Activated CD4-positive, alpha-beta T cell treated with anti-CD3 and anti-CD28 coated beads for 36 hours (primary cell): ENCODE measurements at regions of chr1 and their contacts with region 1.

Region 1: DNA sequence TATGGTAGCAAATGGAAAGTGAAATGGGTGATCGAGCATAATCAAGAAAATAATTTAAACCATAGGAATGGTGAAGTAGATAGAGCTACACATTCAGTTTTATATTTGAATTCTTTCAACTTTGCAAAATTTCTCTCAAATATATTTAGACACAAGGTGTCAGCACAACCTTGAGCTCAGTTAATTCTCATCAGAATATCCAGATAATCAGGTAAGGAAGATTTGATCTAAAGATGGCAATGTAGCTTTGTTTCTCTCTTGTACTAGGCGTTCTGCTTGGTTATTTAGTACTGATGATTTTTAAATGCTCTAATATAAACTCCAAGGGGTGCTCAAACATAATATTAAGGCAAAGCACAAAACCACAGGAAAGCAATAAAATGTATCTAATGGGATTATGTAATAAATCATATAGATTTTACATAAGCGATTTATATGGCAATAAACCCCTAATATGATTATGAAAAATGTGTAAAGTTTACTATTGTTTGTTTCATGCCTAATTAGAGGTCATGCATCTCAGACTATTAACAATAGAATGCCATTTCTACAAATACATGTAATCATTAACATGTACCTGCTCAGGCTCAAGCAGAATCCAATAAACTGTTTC is 32.4 kb upstream of the SERTAD4 start:
- DNase-seq: no peak
- ATAC-seq: no peak
- H3K4me3 Mint-ChIP-seq: no peak overlapping the region
- H3K27ac Mint-ChIP-seq: no peak overlapping the region
- H3K4me1 Mint-ChIP-seq: no peaks in the 10 kb centered on the region
- H3K27me3 Mint-ChIP-seq: peaks cover 7% of the 10 kb centered on the region

Region 2: DNA sequence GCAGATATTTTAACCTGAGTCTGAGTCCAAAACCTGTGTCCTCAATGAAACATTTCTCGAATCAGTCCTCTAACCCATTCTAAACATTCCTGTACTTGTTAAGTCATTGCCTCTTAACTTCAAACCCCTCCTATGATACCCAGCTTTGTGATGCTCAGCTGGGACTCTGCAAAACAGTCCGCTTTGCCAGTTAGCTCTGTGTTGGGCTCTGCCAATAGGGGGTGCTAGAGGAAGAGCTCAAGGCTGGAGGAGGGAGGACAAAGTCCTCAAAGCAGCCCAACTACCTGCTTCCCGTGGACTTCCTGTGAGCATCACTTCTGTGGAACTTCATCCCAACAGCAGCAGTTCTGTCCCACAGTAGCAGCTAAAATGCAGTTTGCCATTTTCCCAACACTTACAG is 300.3 kb before region 1 on chr1:
- CTCF ChIA-PET with region 1: no interaction called
- POLR2A ChIA-PET with region 1: no interaction called
- intact Hi-C with region 1: no loop called
- DNase-seq: peak; percentile 61
- ATAC-seq: no peak
- H3K4me3 Mint-ChIP-seq: no peak overlapping the region
- H3K27ac Mint-ChIP-seq: no peak overlapping the region
- H3K4me1 Mint-ChIP-seq: peaks cover 8% of the 10 kb centered on the region
- H3K27me3 Mint-ChIP-seq: peaks cover 6% of the 10 kb centered on the region

Region 3: GRCh38 chr1:210061992-210062391 is 138.2 kb before region 1 on chr1:
- CTCF ChIA-PET with region 1: no interaction called
- POLR2A ChIA-PET with region 1: no interaction called
- intact Hi-C with region 1: no loop called
- DNase-seq: no peak
- ATAC-seq: no peak
- H3K4me3 Mint-ChIP-seq: no peak overlapping the region
- H3K27ac Mint-ChIP-seq: no peak overlapping the region
- H3K4me1 Mint-ChIP-seq: no peaks in the 10 kb centered on the region
- H3K27me3 Mint-ChIP-seq: peaks cover 5% of the 10 kb centered on the region

Region 4: GRCh38 chr1:210214573-210215409 is 14.6 kb after region 1 on chr1:
- CTCF ChIA-PET with region 1: no interaction called
- POLR2A ChIA-PET with region 1: interaction called, 12 read pairs
- intact Hi-C with region 1: no loop called
- DNase-seq: no peak
- ATAC-seq: no peak
- H3K4me3 Mint-ChIP-seq: no peak overlapping the region
- H3K27ac Mint-ChIP-seq: no peak overlapping the region
- H3K4me1 Mint-ChIP-seq: no peaks in the 10 kb centered on the region
- H3K27me3 Mint-ChIP-seq: peaks cover 22% of the 10 kb centered on the region

Region 5: GRCh38 chr1:210272666-210273065 is 72.4 kb after region 1 on chr1:
- CTCF ChIA-PET with region 1: no interaction called
- POLR2A ChIA-PET with region 1: no interaction called
- intact Hi-C with region 1: no loop called
- DNase-seq: no peak
- ATAC-seq: no peak
- H3K4me3 Mint-ChIP-seq: no peak overlapping the region
- H3K27ac Mint-ChIP-seq: no peak overlapping the region
- H3K4me1 Mint-ChIP-seq: no peaks in the 10 kb centered on the region
- H3K27me3 Mint-ChIP-seq: peaks cover 15% of the 10 kb centered on the region

Region 6: GRCh38 chr1:210292231-210292871 is 92.1 kb after region 1 on chr1:
- CTCF ChIA-PET with region 1: no interaction called
- POLR2A ChIA-PET with region 1: no interaction called
- intact Hi-C with region 1: no loop called
- DNase-seq: peak; percentile 74
- ATAC-seq: peak; percentile 80
- H3K4me3 Mint-ChIP-seq: no peak overlapping the region
- H3K27ac Mint-ChIP-seq: no peak overlapping the region
- H3K4me1 Mint-ChIP-seq: peaks cover 5% of the 10 kb centered on the region
- H3K27me3 Mint-ChIP-seq: peaks cover 55% of the 10 kb centered on the region

Region 7: DNA sequence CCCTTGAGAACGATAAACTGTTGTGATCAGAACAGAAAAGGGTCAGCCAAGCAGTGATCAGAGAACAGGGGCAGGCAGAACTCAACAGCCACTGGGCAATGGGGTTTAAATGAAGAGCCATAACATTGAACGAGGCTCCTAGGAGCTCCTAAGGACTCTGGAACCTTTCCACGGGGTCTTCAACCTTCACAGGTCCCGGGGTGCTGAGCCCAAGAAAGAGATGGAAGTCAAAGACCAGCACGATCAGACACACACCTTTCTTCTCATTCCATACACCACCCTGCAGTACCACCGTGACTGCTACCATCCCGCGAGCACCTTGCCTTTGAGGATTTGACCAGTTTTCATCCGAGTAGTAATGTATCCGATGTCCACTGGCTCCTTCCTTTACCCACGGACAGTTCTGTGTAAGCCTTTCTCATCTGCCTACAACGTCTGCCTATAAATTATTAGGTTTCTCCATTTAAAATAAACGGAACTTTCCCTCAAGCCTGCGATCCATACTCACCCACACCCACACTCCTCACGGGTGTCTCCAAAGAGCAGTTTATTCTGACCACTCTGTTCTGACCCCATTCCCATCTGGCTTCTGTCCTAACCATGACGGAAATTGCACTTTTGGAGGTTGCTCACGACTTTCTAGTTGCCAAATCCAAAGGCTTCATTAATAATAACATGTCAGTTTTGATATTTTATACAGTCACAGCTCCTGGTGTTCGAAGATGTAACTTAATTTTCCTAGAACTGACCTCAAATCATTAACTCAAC is 111.7 kb after region 1 on chr1:
- CTCF ChIA-PET with region 1: no interaction called
- POLR2A ChIA-PET with region 1: no interaction called
- intact Hi-C with region 1: loop called in 1 of 2 experiments (anchors 1 kb)
- DNase-seq: no peak
- ATAC-seq: no peak
- H3K4me3 Mint-ChIP-seq: peak overlapping the region; percentile 68
- H3K27ac Mint-ChIP-seq: peak overlapping the region; percentile 10
- H3K4me1 Mint-ChIP-seq: peaks cover 6% of the 10 kb centered on the region
- H3K27me3 Mint-ChIP-seq: peaks cover 17% of the 10 kb centered on the region